WTC11 (cell line): ENCODE measurements at regions of chr2 and their contacts with region 1.

Region 1: GRCh38 chr2:239824046-239824694 is 201.0 kb downstream of the NDUFA10 start:
- DNase-seq: peak; percentile 65
- ATAC-seq: peak; percentile 93
- H3K4me3 Mint-ChIP-seq: peak overlapping the region; percentile 53
- H3K27ac Mint-ChIP-seq: no peak overlapping the region
- H3K4me1 Mint-ChIP-seq: peaks cover 13% of the 10 kb centered on the region
- H3K27me3 Mint-ChIP-seq: no peaks in the 10 kb centered on the region
- CTCF ChIP-seq: no peak; the same call in 1 of the 2 replicates

Region 2: GRCh38 chr2:238988762-238989161 is 835.4 kb before region 1 on chr2:
- CTCF ChIA-PET with region 1: no interaction called
- POLR2A ChIA-PET with region 1: no interaction called
- DNase-seq: no peak
- ATAC-seq: no peak
- H3K4me3 Mint-ChIP-seq: no peak overlapping the region
- H3K27ac Mint-ChIP-seq: no peak overlapping the region
- H3K4me1 Mint-ChIP-seq: peaks cover 6% of the 10 kb centered on the region
- H3K27me3 Mint-ChIP-seq: peaks cover under 1% of the 10 kb centered on the region; the same call in 1 of the 2 replicates
- CTCF ChIP-seq: no peak

Region 3: DNA sequence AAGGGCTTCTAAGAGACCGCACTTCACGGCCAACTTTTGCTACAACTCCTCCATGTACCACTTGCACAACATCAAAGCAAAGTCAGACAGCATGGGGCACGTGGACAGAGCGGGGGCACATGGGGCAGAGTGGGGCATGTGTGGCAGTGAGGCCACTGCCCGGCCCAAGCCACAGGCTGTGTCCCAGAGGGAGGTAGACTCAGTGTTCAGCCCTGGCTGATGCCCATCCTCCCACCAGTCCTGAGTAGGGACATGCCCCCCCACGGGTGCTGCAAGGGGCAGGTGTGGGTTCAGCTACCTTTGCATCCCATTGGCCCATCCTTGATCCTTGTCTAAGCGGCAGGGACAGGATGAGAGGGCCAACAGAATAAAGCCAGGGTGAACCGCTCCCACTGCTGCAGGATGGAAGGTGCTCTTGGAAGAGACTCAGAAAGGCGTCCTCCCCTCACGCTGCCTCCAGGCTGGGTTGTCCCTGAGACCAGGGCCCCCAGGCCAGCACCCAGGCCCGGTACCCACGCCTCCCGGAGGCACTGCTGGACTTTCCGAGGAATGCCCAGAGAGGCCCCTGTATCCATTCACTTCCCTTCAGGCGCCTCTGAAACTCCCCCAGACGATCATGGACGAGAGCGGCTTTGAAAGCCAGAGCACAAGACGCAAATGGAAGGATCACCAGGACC is 17.3 kb before region 1 on chr2:
- CTCF ChIA-PET with region 1: interaction called, 13 read pairs
- POLR2A ChIA-PET with region 1: no interaction called
- DNase-seq: no peak
- ATAC-seq: no peak
- H3K4me3 Mint-ChIP-seq: no peak overlapping the region
- H3K27ac Mint-ChIP-seq: no peak overlapping the region
- H3K4me1 Mint-ChIP-seq: peaks cover 4% of the 10 kb centered on the region; the same call in 1 of the 2 replicates
- H3K27me3 Mint-ChIP-seq: no peaks in the 10 kb centered on the region
- CTCF ChIP-seq: no peak

Region 4: DNA sequence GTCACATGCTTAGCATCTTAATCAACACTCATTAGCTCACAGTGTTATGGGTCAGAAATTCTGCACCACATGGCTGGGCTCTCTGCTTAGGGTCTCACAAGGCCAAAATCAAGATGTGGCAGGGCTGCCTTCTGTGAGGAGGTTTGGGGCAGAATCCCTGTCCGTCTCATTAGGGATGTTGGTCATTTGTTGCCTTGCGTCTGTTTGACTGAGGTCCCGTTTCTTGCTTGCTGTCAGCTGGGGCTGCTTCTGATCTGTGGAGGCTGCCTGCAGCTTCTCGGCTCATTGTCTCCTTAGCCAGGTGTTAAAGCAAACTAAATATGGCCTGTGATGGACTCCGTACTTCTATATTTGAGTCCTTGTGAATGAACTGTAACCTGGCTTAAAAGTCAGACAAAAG is 54.5 kb after region 1 on chr2:
- CTCF ChIA-PET with region 1: interaction called, 13 read pairs
- POLR2A ChIA-PET with region 1: no interaction called
- DNase-seq: no peak
- ATAC-seq: no peak
- H3K4me3 Mint-ChIP-seq: no peak overlapping the region
- H3K27ac Mint-ChIP-seq: no peak overlapping the region
- H3K4me1 Mint-ChIP-seq: peaks cover 24% of the 10 kb centered on the region
- H3K27me3 Mint-ChIP-seq: no peaks in the 10 kb centered on the region; the same call in 1 of the 2 replicates
- CTCF ChIP-seq: no peak

Region 5: DNA sequence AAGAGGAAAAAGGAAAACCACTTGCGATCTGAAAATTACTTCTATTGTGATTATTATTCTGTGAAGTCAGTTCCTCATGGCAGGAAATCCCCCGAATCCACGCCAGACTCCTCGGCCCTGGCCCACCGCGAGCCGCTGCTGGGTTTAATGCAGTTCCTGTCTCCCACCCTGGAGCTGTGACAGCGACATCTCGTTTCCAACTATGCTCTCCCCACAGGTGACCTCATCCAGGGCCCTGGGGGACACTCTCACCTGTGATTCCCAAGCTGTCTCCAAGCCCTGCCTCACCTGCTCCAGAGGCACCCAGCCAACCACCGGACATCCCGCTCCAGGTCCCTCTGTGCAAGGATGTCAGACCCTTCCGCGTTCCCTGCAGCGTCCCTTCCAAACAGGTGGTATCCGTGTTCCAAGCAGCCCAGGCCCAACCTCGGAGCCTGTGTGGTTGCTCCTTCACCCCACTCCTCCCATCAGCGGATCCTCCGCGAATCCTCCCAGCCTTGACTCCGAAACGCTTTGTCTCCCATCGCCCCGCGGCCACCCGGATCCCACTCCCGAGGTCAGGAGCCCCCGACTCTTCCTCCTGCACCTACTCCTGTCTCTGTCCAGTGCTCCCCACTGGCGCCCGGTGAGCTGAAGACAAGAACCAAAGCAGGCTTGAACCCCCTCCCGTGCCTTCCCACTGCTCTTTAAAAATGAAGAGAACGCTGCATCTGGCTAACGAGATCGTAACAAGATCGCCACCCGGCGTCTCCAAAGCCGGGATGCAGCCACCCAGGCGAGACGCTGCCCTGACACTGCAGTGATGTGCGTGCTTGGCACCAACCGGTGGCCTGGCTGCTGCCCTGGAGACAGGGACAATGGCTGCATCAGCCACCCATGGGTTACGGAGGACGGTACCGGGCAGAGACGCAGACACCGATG is 104.5 kb after region 1 on chr2:
- CTCF ChIA-PET with region 1: interaction called, 10 read pairs
- POLR2A ChIA-PET with region 1: interaction called, 6 read pairs
- DNase-seq: peak; percentile 42
- ATAC-seq: peak; percentile 69
- H3K4me3 Mint-ChIP-seq: no peak overlapping the region
- H3K27ac Mint-ChIP-seq: no peak overlapping the region
- H3K4me1 Mint-ChIP-seq: 0 out of 2 replicates have a peak, but pooled peaks cover 6% of the 10 kb centered on the region
- H3K27me3 Mint-ChIP-seq: no peaks in the 10 kb centered on the region
- CTCF ChIP-seq: no peak

Region 6: GRCh38 chr2:239934571-239935171 is 110.5 kb after region 1 on chr2:
- CTCF ChIA-PET with region 1: interaction called, 17 read pairs
- POLR2A ChIA-PET with region 1: no interaction called
- DNase-seq: peak; percentile 81
- ATAC-seq: peak; percentile 90
- H3K4me3 Mint-ChIP-seq: no peak overlapping the region
- H3K27ac Mint-ChIP-seq: no peak overlapping the region
- H3K4me1 Mint-ChIP-seq: no peaks in the 10 kb centered on the region; the same call in 1 of the 2 replicates
- H3K27me3 Mint-ChIP-seq: no peaks in the 10 kb centered on the region; the same call in 1 of the 2 replicates
- CTCF ChIP-seq: peak; percentile 76

Region 7: GRCh38 chr2:239979243-239980023 is 155.3 kb after region 1 on chr2:
- CTCF ChIA-PET with region 1: interaction called, 10 read pairs
- POLR2A ChIA-PET with region 1: no interaction called
- DNase-seq: peak; percentile 69
- ATAC-seq: peak; percentile 98
- H3K4me3 Mint-ChIP-seq: no peak overlapping the region
- H3K27ac Mint-ChIP-seq: peak overlapping the region; percentile 72; the same call in 1 of the 2 replicates
- H3K4me1 Mint-ChIP-seq: peaks cover 6% of the 10 kb centered on the region; the same call in 1 of the 2 replicates
- H3K27me3 Mint-ChIP-seq: no peaks in the 10 kb centered on the region
- CTCF ChIP-seq: no peak

Region 8: GRCh38 chr2:240021488-240022104 is 197.4 kb after region 1 on chr2:
- CTCF ChIA-PET with region 1: interaction called, 13 read pairs
- POLR2A ChIA-PET with region 1: no interaction called
- DNase-seq: peak; percentile 93
- ATAC-seq: peak; percentile 77
- H3K4me3 Mint-ChIP-seq: no peak overlapping the region
- H3K27ac Mint-ChIP-seq: no peak overlapping the region
- H3K4me1 Mint-ChIP-seq: peaks cover 10% of the 10 kb centered on the region
- H3K27me3 Mint-ChIP-seq: no peaks in the 10 kb centered on the region; the same call in 1 of the 2 replicates
- CTCF ChIP-seq: peak; percentile 75